ENCODE measurements at regions of chr17 and their contacts with region 1.

Region 1: GRCh38 chr17:4796553-4796921 is 573 bp downstream of the PSMB6 start:
- DNase-seq: no peak
- H3K4me3 ChIP-seq: peak overlapping the region; percentile 68 to 90 (median 72)
- H3K27ac ChIP-seq: peak overlapping the region; percentile 79 to 89 (median 84)
- H3K4me1 ChIP-seq: peaks cover 0 to 16% (median 10%) of the 10 kb centered on the region in 4 donors
- H3K27me3 ChIP-seq: no peaks in the 10 kb centered on the region
- CTCF ChIP-seq: no peak
- EP300 ChIP-seq: no peak
- POLR2A ChIP-seq: no peak

Region 2: GRCh38 chr17:4733073-4733531 is 63.4 kb before region 1 on chr17:
- intact Hi-C with region 1: loop called (anchors 2 kb)
- DNase-seq: no peak
- H3K4me3 ChIP-seq: no peak overlapping the region
- H3K27ac ChIP-seq: peak overlapping the region in 1 of 4 donors; percentile 9
- H3K4me1 ChIP-seq: peaks cover 0 to 19% (median 14%) of the 10 kb centered on the region in 4 donors
- H3K27me3 ChIP-seq: no peaks in the 10 kb centered on the region
- CTCF ChIP-seq: no peak
- EP300 ChIP-seq: no peak
- POLR2A ChIP-seq: no peak

Region 3: GRCh38 chr17:4833178-4833940 is 36.8 kb after region 1 on chr17 and contains the start of gene MINK1:
- intact Hi-C with region 1: loop called (anchors 5 kb)
- DNase-seq: peak; percentile 94
- H3K4me3 ChIP-seq: peak within 1 kb of the TSS; percentile 75 to 99 (median 84)
- H3K27ac ChIP-seq: peak within 1 kb of the TSS; percentile 85 to 94 (median 88)
- H3K4me1 ChIP-seq: peaks cover 0 to 34% (median 18%) of the 10 kb centered on the region in 4 donors
- H3K27me3 ChIP-seq: no peaks in the 10 kb centered on the region
- CTCF ChIP-seq: no peak
- EP300 ChIP-seq: no peak
- POLR2A ChIP-seq: peak; percentile 65 to 73
- total RNA-seq, gene MINK1: 17.1 to 43.8 (median 21.0) TPM

Measured in sigmoid colon (tissue), 7 donors.